Caco-2 (cell line): ENCODE measurements at regions of chr5 and their contacts with region 1.

Region 1: DNA sequence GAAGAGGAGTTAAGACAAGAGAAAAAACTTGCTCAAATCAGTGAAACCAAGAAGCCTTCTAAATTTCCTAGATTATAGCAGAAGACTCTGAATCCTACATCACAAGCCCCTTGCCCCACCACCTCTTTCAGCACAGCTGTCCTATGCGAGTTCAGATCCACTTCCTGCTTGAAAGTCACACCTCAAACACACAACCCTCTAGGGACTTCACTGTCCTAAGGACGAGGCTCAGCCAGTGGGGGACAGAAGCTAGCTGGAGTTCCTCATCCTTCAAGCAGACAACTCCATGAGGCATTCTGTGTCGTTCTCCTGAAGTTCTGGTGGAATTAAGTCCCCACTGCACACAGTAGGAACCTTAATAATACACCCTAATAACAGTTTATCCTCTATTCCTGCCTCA is 44.3 kb downstream of the NRG2 start:
- DNase-seq: no peak
- H3K4me3 ChIP-seq: no peak overlapping the region
- H3K4me3 Mint-ChIP-seq: no peak overlapping the region
- H3K27ac Mint-ChIP-seq: no peak overlapping the region
- H3K4me1 ChIP-seq: peaks cover 17% of the 10 kb centered on the region
- H3K4me1 Mint-ChIP-seq: no peaks in the 10 kb centered on the region
- H3K27me3 ChIP-seq: no peaks in the 10 kb centered on the region
- H3K27me3 Mint-ChIP-seq: peaks cover 8% of the 10 kb centered on the region
- CTCF ChIP-seq: no peak

Region 2: DNA sequence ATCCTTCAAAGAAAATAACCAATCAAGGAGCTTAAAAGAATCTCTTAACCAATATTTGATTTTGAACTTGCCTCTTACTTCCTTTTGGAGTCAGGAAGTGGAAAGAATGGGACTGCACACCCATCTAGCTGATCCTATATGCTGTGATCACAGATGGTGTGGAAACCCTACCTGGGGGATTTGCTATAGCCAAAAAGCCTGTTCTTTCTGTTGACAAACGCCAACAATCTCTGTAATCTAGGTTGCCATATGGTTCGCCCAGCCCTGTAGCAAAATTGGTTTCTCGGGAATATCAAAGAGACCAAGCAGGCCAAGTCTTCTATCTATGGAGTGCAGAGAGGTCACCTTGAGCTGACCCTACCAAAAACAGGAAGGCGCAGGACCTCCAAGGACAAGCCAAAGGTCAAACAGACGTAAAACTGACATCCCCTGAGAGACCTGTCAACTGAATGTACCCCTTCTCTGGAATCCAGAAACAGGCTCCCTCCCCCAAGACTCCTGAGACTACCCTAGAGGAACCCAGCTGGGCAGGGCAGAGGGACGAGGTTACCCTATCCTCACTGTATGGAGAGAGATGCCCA is 24.9 kb after region 1 on chr5:
- CTCF ChIA-PET with region 1: interaction called, 3 read pairs
- POLR2A ChIA-PET with region 1: no interaction called
- intact Hi-C with region 1: loop called (anchors 1 kb)
- DNase-seq: no peak
- H3K4me3 ChIP-seq: no peak overlapping the region
- H3K4me3 Mint-ChIP-seq: no peak overlapping the region
- H3K27ac Mint-ChIP-seq: no peak overlapping the region
- H3K4me1 ChIP-seq: peaks cover 33% of the 10 kb centered on the region
- H3K4me1 Mint-ChIP-seq: peaks cover 7% of the 10 kb centered on the region
- H3K27me3 ChIP-seq: no peaks in the 10 kb centered on the region
- H3K27me3 Mint-ChIP-seq: no peaks in the 10 kb centered on the region
- CTCF ChIP-seq: no peak